ENCODE measurements at regions of chr9 and their contacts with region 1.

Region 1: DNA sequence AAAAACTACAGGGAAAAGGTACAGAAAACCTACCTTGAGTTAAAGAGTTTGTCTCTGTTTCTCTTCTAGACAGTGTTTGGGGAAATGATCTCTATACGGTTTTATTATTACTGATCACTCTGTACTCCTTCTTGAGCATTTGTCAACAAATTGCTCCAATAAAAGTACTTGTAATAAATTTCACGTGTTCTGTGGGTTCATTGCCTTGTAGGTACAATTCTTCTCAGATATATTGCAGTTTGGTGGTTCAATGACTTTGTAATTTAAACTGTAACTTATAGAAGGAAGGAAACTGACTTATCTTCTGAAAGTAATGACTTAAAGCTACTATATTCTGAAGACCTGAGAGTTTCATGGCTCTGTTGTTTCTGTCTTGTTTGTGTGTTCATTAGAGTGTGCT is 319.9 kb upstream of the PCSK5 start:
- DNase-seq: no peak
- H3K4me3 ChIP-seq: no peak overlapping the region
- CTCF ChIP-seq: no peak
- POLR2A ChIP-seq: no peak

Region 2: GRCh38 chr9:77020438-77021290 is 1450.1 kb after region 1 on chr9:
- intact Hi-C with region 1: loop called (anchors 5 kb)
- DNase-seq: no peak
- H3K4me3 ChIP-seq: no peak overlapping the region
- CTCF ChIP-seq: no peak
- POLR2A ChIP-seq: no peak